Activated CD4-positive, alpha-beta T cell treated with anti-CD3 and anti-CD28 coated beads for 36 hours (primary cell): ENCODE measurements at regions of chr15 and their contacts with region 1.

Region 1: GRCh38 chr15:74787251-74788041 is 5.6 kb downstream of the CSK start:
- DNase-seq: peak; percentile 97
- ATAC-seq: peak; percentile 74
- H3K4me3 Mint-ChIP-seq: peak overlapping the region; percentile 89
- H3K27ac Mint-ChIP-seq: peak overlapping the region; percentile 100
- H3K4me1 Mint-ChIP-seq: peaks cover 58% of the 10 kb centered on the region
- H3K27me3 Mint-ChIP-seq: no peaks in the 10 kb centered on the region

Region 2: DNA sequence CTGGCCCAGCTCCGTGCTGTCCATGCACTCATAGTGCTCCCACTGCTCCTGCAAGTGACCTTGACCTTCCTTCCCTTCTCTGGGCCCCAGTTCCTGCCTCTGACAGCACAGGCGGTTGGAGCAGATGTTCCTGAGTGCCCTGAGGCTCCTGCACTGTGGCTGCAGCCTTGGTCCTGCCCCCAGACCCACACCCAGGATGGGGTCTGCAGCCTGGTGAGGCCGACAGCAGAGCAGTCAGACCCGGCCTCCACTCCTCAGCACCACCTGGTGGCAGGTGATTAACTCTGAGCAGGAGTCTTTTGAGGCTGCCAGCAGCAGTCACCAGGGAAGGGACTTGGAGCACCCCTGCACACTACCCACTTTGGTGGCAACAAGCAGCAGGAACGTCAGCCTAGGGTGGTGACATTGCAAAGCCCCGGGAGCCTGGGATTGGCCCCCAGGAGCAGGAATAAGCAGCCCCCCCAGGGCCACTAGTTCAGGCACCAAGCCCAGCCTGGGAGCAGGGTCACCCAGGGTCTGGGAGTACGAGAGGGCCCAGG is 484.6 kb before region 1 on chr15:
- CTCF ChIA-PET with region 1: no interaction called
- POLR2A ChIA-PET with region 1: no interaction called
- intact Hi-C with region 1: no loop called
- DNase-seq: peak; percentile 73
- ATAC-seq: peak; percentile 68
- H3K4me3 Mint-ChIP-seq: no peak overlapping the region
- H3K27ac Mint-ChIP-seq: no peak overlapping the region
- H3K4me1 Mint-ChIP-seq: no peaks in the 10 kb centered on the region
- H3K27me3 Mint-ChIP-seq: peaks cover 24% of the 10 kb centered on the region

Region 3: DNA sequence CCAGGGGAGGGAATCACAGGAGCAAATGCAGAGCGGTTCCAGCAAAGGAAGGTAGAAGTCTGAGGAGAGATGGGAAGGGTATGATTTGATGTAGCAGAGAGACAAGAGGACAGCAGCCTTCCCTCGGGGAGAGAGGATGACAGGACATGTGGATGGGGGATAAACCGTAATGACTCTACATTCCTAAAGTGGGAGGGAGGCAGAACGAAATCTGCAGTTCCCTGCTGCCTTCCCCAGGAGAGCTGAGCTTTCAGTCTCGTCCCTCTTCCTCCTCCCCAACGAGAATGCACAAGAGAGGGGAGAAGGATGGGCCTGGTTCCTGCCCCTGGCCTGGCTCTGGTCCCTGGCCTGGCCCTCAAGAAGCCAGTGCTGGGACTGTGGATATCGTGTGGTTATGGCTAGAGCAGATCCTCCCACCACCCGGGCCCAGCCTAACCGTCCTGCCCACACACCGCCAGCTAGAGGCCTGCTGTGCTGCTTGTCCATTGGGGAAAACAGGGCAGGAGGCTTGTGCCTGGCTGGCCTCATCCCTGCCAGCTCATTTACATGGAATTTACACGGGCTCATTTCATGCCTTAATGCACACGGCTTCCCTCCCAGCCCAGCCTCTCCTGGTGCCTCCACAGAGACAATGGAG is 380.3 kb before region 1 on chr15:
- CTCF ChIA-PET with region 1: interaction called, 3 read pairs
- POLR2A ChIA-PET with region 1: no interaction called
- intact Hi-C with region 1: loop called in 1 of 2 experiments (anchors 5 kb)
- DNase-seq: no peak
- ATAC-seq: no peak
- H3K4me3 Mint-ChIP-seq: no peak overlapping the region
- H3K27ac Mint-ChIP-seq: no peak overlapping the region
- H3K4me1 Mint-ChIP-seq: peaks cover 29% of the 10 kb centered on the region
- H3K27me3 Mint-ChIP-seq: no peaks in the 10 kb centered on the region

Region 4: DNA sequence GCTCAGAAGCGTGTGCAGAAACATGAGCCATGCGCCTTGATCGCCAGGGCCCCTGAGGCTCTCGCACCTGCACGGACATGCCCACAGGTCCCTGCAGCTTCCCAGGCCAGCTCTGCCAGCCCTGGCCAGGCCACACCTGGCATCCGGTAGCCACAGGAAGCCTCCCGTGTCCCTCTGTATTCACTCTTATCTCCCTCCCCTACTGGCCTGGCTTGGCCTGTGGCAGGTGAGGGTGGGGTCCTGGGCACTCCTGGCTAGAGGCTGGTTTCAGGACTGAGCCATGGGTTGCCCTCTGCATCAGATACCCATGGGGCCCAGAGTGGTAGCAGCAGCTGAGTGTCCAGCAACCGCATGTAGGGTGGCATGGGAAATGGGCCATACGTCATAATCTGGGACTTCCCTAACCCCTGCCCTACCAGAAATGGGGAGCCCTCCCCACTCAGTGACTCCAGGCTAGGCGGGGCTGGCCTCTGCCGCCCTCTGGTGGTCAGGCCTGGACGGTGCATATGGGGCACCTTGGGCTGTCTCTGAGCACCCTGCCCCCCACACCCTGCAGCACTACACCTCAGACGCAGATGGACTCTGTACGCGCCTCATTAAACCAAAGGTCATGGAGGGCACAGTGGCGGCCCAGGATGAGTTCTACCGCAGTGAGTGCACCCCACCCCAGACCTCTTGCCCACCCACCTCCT is 12.6 kb after region 1 on chr15:
- CTCF ChIA-PET with region 1: interaction called, 743 read pairs
- POLR2A ChIA-PET with region 1: interaction called, 20 read pairs
- intact Hi-C with region 1: loop called (anchors 1 kb)
- DNase-seq: peak; percentile 93
- ATAC-seq: peak; percentile 87
- H3K4me3 Mint-ChIP-seq: no peak overlapping the region
- H3K27ac Mint-ChIP-seq: peak overlapping the region; percentile 80
- H3K4me1 Mint-ChIP-seq: peaks cover 44% of the 10 kb centered on the region
- H3K27me3 Mint-ChIP-seq: no peaks in the 10 kb centered on the region

Region 5: GRCh38 chr15:74873036-74873755 is 85.8 kb after region 1 on chr15 and contains the start of gene SCAMP2:
- CTCF ChIA-PET with region 1: interaction called, 8 read pairs
- POLR2A ChIA-PET with region 1: no interaction called
- intact Hi-C with region 1: loop called in 1 of 2 experiments (anchors 5 kb)
- DNase-seq: peak; percentile 94
- ATAC-seq: peak; percentile 84
- H3K4me3 Mint-ChIP-seq: peak within 1 kb of the TSS; percentile 87
- H3K27ac Mint-ChIP-seq: peak within 1 kb of the TSS; percentile 87
- H3K4me1 Mint-ChIP-seq: peaks cover 48% of the 10 kb centered on the region
- H3K27me3 Mint-ChIP-seq: no peaks in the 10 kb centered on the region
- total RNA-seq, gene SCAMP2: 61.6 to 83.4 TPM

Region 6: GRCh38 chr15:75723847-75724660 is 936.6 kb after region 1 on chr15:
- CTCF ChIA-PET with region 1: no interaction called
- POLR2A ChIA-PET with region 1: no interaction called
- intact Hi-C with region 1: no loop called
- DNase-seq: peak; percentile 73
- ATAC-seq: peak; percentile 53
- H3K4me3 Mint-ChIP-seq: no peak overlapping the region
- H3K27ac Mint-ChIP-seq: no peak overlapping the region
- H3K4me1 Mint-ChIP-seq: peaks cover 8% of the 10 kb centered on the region
- H3K27me3 Mint-ChIP-seq: peaks cover 9% of the 10 kb centered on the region